Left ventricle myocardium inferior (tissue), 1 donor: ENCODE measurements at regions of chr18 and their contacts with region 1.

Region 1: GRCh38 chr18:43271593-43272432 is 5.5 kb downstream of the SYT4 start:
- DNase-seq: no peak
- H3K4me3 ChIP-seq: no peak overlapping the region
- H3K27ac ChIP-seq: no peak overlapping the region
- H3K4me1 ChIP-seq: no peaks in the 10 kb centered on the region
- H3K27me3 ChIP-seq: peaks cover 14% of the 10 kb centered on the region
- CTCF ChIP-seq: peak; percentile 82

Region 2: GRCh38 chr18:42114310-42114943 is 1157.4 kb before region 1 on chr18:
- intact Hi-C with region 1: loop called (anchors 10 kb)
- DNase-seq: peak; percentile 25
- H3K4me3 ChIP-seq: no peak overlapping the region
- H3K27ac ChIP-seq: peak overlapping the region; percentile 31
- H3K4me1 ChIP-seq: peaks cover 5% of the 10 kb centered on the region
- H3K27me3 ChIP-seq: no peaks in the 10 kb centered on the region
- CTCF ChIP-seq: peak; percentile 91

Region 3: DNA sequence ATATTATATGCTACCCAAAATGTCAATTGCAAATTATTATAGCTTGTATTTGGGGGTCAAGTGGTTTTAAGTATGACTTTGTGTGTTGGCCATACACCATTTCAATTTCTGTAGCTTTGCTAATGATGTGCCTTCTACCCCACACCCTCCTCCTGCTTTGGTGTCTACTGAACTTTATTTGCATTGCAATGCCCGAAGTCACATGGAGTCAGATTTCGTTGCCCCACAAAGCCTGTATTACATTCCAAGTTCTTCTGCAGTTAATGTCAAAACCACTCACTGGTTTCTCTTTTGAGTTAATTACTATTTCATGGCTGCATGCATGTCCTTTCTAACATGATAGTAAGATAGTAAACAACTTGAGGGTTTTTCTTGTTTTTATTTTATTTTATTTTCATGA is 685.2 kb before region 1 on chr18:
- intact Hi-C with region 1: loop called (anchors 10 kb)
- DNase-seq: no peak
- H3K4me3 ChIP-seq: no peak overlapping the region
- H3K27ac ChIP-seq: no peak overlapping the region
- H3K4me1 ChIP-seq: no peaks in the 10 kb centered on the region
- H3K27me3 ChIP-seq: no peaks in the 10 kb centered on the region
- CTCF ChIP-seq: no peak

Region 4: DNA sequence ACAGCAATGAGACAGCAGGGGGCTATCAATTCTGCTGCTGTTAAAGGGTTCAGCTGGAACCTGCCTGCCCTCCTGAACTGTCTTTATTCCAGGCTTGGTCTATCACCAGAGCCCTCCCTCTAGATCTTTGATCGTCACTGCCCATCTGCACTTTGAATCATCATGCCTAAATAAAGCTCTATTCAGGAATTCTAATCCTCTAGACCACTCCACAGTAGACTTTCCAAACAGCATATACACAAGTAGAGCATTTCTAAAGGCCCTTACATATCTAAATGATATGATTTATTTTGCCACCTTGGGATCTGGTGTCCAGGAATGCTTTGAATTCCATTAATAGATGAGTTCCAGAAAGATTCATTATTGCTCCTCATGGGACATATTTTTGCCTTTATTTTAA is 547.6 kb after region 1 on chr18:
- intact Hi-C with region 1: no loop called
- DNase-seq: no peak
- H3K4me3 ChIP-seq: no peak overlapping the region
- H3K27ac ChIP-seq: no peak overlapping the region
- H3K4me1 ChIP-seq: no peaks in the 10 kb centered on the region
- H3K27me3 ChIP-seq: no peaks in the 10 kb centered on the region
- CTCF ChIP-seq: no peak